H1 (cell line): ENCODE measurements at regions of chr7 and their contacts with region 1.

Region 1: GRCh38 chr7:35519971-35520809 is 174.7 kb downstream of the HERPUD2 start:
- DNase-seq: peak in 1 of 2 experiments; percentile 81
- H3K4me3 ChIP-seq: no peak overlapping the region
- H3K27ac ChIP-seq: no peak overlapping the region
- H3K4me1 ChIP-seq: no peaks in the 10 kb centered on the region
- H3K27me3 ChIP-seq: no peaks in the 10 kb centered on the region
- CTCF ChIP-seq: peak; percentile 61 to 90 (median 85)
- EP300 ChIP-seq: no peak
- POLR2A ChIP-seq: no peak
- RAD21 ChIP-seq: peak; percentile 90 to 96

Region 2: GRCh38 chr7:35185907-35186731 is 334.1 kb before region 1 on chr7:
- CTCF ChIA-PET with region 1: interaction called, 10 read pairs
- POLR2A ChIA-PET with region 1: interaction called, 3 read pairs
- DNase-seq: peak in 1 of 2 experiments; percentile 81
- H3K4me3 ChIP-seq: peak overlapping the region; percentile 24 to 55 (median 30); a peak in 7 of 8 replicates
- H3K27ac ChIP-seq: no peak overlapping the region
- H3K4me1 ChIP-seq: peaks cover 0 to 5% (median 2%) of the 10 kb centered on the region in 4 experiments; a peak in 2 of 7 replicates
- H3K27me3 ChIP-seq: peaks cover 6 to 26% (median 24%) of the 10 kb centered on the region in 4 experiments
- CTCF ChIP-seq: no peak
- EP300 ChIP-seq: no peak
- POLR2A ChIP-seq: no peak
- RAD21 ChIP-seq: no peak

Region 3: GRCh38 chr7:35401217-35401879 is 118.8 kb before region 1 on chr7:
- CTCF ChIA-PET with region 1: interaction called, 12 read pairs
- POLR2A ChIA-PET with region 1: no interaction called
- DNase-seq: no peak
- H3K4me3 ChIP-seq: no peak overlapping the region
- H3K27ac ChIP-seq: no peak overlapping the region
- H3K4me1 ChIP-seq: no peaks in the 10 kb centered on the region
- H3K27me3 ChIP-seq: no peaks in the 10 kb centered on the region
- CTCF ChIP-seq: no peak
- EP300 ChIP-seq: no peak
- POLR2A ChIP-seq: no peak
- RAD21 ChIP-seq: no peak

Region 4: GRCh38 chr7:35424869-35425495 is 95.2 kb before region 1 on chr7:
- CTCF ChIA-PET with region 1: interaction called, 55 read pairs
- POLR2A ChIA-PET with region 1: no interaction called
- DNase-seq: peak in 1 of 2 experiments; percentile 65
- H3K4me3 ChIP-seq: no peak overlapping the region
- H3K27ac ChIP-seq: no peak overlapping the region
- H3K4me1 ChIP-seq: no peaks in the 10 kb centered on the region
- H3K27me3 ChIP-seq: no peaks in the 10 kb centered on the region
- CTCF ChIP-seq: peak; percentile 67 to 97 (median 78)
- EP300 ChIP-seq: no peak
- POLR2A ChIP-seq: no peak
- RAD21 ChIP-seq: peak; percentile 77 to 83

Region 5: GRCh38 chr7:35508623-35509400 is 11.4 kb before region 1 on chr7:
- CTCF ChIA-PET with region 1: interaction called, 33 read pairs
- POLR2A ChIA-PET with region 1: no interaction called
- DNase-seq: no peak
- H3K4me3 ChIP-seq: no peak overlapping the region
- H3K27ac ChIP-seq: no peak overlapping the region
- H3K4me1 ChIP-seq: peaks cover 4 to 13% (median 5%) of the 10 kb centered on the region in 4 experiments
- H3K27me3 ChIP-seq: no peaks in the 10 kb centered on the region
- CTCF ChIP-seq: peak in 1 of 3 experiments; percentile 32; a peak in 2 of 4 replicates
- EP300 ChIP-seq: no peak
- POLR2A ChIP-seq: no peak
- RAD21 ChIP-seq: no peak

Region 6: DNA sequence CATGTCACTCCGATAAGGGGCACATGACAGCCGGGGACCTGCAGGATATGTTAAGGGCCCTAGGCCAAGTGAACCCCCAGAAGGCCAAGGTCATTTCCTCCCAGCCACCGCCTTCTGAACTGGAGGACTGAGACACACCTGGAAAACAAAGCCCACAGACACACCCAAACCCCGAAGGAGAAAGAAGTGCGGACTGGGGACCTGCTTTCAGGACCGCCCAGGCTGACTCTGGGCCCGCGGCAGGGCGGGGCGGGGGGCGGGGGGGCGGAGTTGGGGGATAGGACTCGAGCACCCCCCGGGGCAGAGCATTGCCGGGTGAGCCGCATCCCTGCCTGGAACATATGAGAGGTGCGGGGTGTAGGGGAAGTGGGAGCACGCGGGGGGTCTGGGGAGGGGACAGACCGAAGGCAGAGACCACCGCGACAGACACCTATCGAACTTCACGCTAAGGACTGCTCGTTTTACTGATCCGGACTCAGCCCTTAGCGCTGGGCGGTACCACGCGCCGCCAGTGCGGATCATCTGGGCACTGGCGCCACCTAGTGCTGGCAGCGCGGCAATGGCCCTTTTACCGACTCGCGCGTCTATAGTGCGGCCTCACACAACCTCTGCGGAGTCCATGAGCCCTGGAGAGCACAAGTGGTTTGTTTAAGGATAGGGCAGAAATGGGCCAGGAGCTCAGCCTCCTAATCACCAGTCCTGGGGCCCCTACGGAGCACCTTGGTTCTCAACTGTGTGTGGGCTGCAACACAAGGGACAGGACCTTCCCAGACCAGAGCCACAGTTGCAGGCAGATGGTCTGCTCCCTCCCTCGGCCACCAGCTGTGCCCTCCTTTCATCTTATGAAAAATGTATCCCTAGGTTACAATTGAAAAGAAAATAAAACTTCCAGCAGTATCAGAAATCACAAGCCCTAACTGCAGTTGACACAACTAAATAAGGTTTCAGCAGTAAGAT is 17.2 kb after region 1 on chr7:
- CTCF ChIA-PET with region 1: interaction called, 32 read pairs
- POLR2A ChIA-PET with region 1: no interaction called
- DNase-seq: peak; percentile 54 to 92
- H3K4me3 ChIP-seq: peak overlapping the region in 3 of 4 experiments; percentile 34 to 57 (median 42); a peak in 4 of 8 replicates
- H3K27ac ChIP-seq: no peak overlapping the region
- H3K4me1 ChIP-seq: no peaks in the 10 kb centered on the region
- H3K27me3 ChIP-seq: peaks cover 0 to 14% (median 8%) of the 10 kb centered on the region in 4 experiments; a peak in 4 of 7 replicates
- CTCF ChIP-seq: peak; percentile 90 to 98 (median 93)
- EP300 ChIP-seq: no peak
- POLR2A ChIP-seq: no peak
- RAD21 ChIP-seq: peak; percentile 94 to 95

Region 7: DNA sequence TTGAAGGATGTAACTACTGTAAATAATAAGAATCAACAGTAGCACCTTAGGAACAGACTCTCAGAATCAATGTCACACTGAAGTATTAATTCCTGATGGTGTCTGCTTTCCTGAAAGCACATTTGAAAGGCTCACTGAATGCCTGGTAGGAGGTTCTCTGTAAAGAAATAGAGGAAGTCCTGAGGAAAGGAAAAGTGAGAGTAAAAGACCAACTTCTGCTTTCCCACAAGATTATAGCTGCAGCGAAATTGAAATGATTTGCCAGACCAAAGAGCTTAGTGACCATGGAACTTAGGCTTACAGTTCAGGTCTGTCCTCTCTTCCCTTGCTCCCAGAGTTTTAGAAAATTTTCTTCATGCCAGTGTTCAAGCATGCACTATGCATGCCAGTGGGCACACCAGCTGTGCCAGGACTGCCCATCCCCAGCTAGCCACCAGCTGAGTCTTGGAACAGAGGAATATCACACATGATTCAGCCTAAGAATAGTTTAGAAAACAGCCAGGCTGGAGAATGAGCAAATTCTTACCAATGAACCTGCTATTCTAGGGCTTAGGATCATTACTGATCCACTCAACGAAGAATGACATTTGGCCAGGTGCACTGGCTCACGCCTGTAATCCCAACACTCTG is 51.5 kb after region 1 on chr7:
- CTCF ChIA-PET with region 1: no interaction called
- POLR2A ChIA-PET with region 1: no interaction called
- DNase-seq: no peak
- H3K4me3 ChIP-seq: no peak overlapping the region
- H3K27ac ChIP-seq: no peak overlapping the region
- H3K4me1 ChIP-seq: no peaks in the 10 kb centered on the region
- H3K27me3 ChIP-seq: no peaks in the 10 kb centered on the region
- CTCF ChIP-seq: no peak
- EP300 ChIP-seq: no peak
- POLR2A ChIP-seq: no peak
- RAD21 ChIP-seq: no peak

Region 8: GRCh38 chr7:35624299-35625186 is 104.4 kb after region 1 on chr7:
- CTCF ChIA-PET with region 1: interaction called, 15 read pairs
- POLR2A ChIA-PET with region 1: no interaction called
- DNase-seq: peak; percentile 29 to 64
- H3K4me3 ChIP-seq: no peak overlapping the region
- H3K27ac ChIP-seq: no peak overlapping the region
- H3K4me1 ChIP-seq: peaks cover 0 to 2% (median 0%) of the 10 kb centered on the region in 4 experiments; a peak in 3 of 7 replicates
- H3K27me3 ChIP-seq: no peaks in the 10 kb centered on the region
- CTCF ChIP-seq: peak; percentile 50 to 86 (median 84)
- EP300 ChIP-seq: no peak
- POLR2A ChIP-seq: no peak
- RAD21 ChIP-seq: peak; percentile 95 to 97